Spleen (tissue), 13 donors: ENCODE measurements at regions of chr19 and their contacts with region 1.

Region 1: DNA sequence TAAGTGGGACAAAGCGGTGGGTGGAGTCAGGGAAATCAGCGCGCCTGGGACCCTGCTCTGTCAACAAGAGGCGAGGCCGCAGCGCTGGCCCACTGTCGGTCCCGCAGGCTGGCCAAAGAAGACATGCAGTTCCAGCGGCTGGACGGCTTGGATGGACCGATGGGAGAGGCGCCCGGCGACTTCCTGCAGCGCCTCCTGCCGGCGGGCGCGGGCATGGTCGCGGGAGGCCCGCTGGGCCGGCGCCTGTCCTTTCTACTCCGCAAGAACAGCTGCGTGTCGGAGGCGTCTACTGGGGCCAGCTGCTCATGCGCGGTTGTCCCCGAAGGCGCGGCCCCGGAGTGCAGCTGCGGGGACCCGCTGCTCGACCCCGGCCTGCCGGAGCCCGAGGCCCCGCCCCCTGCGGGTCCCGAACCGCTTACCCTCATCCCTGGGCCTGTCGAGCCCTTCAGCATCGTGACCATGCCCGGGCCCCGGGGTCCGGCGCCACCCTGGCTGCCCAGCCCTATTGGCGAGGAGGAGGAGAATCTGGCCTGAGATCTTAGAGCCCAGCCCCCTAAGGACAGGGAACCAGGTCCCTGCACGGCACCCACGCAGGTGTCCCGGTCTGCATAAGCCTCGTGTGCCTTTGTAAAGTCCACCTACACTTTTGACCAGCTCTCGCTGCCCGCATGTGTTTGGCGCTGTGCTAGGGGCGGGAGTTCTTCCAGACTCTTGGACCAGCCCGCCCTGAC is 6.1 kb downstream of the BEST2 start:
- DNase-seq: peak; percentile 92
- H3K4me3 ChIP-seq: peak overlapping the region in 7 of 8 donors; percentile 16 to 64 (median 29)
- H3K27ac ChIP-seq: peak overlapping the region in 4 of 8 donors; percentile 7 to 50 (median 40)
- H3K4me1 ChIP-seq: peaks cover 0 to 22% (median 15%) of the 10 kb centered on the region in 6 donors
- H3K27me3 ChIP-seq: peaks cover 0 to 52% (median 0%) of the 10 kb centered on the region in 7 donors
- CTCF ChIP-seq: peak; percentile 74 to 97 (median 94)
- POLR2A ChIP-seq: no peak

Region 2: DNA sequence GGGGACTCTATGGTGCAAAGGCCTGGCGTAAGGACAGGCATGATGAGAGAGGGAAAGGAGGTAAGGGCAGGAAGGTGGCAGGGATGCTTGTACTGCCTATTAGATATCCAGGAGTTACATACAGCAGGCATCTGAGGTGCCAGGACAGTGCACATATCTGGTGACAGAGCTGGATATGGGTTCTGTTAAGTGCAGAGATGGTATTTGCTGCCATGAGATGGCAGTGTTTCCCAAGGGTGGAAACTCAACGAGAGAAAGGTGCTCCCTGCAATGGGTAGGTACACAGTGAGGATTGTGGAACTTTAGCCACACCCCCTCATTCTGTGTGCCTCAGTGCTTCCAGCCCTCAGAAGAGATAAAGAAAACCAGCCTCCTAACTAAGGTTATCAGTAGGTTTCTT is 40.8 kb before region 1 on chr19:
- intact Hi-C with region 1: loop called (anchors 5 kb)
- DNase-seq: no peak
- H3K4me3 ChIP-seq: no peak overlapping the region
- H3K27ac ChIP-seq: no peak overlapping the region
- H3K4me1 ChIP-seq: peaks cover 8 to 49% (median 25%) of the 10 kb centered on the region in 6 donors
- H3K27me3 ChIP-seq: no peaks in the 10 kb centered on the region
- CTCF ChIP-seq: peak in 4 of 11 experiments; percentile 16 to 51 (median 42)
- POLR2A ChIP-seq: no peak